ENCODE measurements at regions of chr13 and their contacts with region 1.

Region 1: DNA sequence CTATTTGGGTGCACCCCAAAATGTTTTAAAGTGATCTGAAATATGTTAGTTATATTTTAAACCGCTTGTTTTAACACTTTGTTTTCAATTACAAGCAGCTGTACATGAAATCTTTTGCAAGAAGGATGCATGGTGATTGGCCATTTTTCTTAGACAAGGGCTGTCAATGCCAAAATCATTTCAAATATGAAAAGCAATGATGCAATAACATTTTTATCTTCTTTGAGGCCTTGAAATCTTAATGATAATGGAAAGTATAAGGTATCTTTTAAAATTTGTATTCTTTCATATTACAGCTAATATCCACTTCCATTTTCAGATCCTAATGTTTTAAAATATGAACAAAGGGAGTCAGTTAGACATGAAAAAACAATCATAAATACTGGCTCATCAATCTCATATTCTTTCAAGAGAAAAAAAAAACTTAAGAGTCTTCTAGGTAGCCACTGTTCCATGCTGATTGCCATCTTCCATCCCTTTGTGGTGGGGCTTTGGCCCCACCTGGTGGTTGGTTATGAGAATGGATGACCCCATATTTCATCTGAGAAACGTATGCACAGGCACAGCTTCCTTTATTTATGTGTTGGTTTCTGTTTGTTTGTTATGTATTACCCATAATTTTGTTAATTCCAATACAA is 330.3 kb upstream of the MIR17HG start:
- DNase-seq: peak; percentile 43
- H3K4me3 Mint-ChIP-seq: no peak overlapping the region
- H3K27ac Mint-ChIP-seq: no peak overlapping the region
- H3K4me1 Mint-ChIP-seq: no peaks in the 10 kb centered on the region
- H3K27me3 Mint-ChIP-seq: no peaks in the 10 kb centered on the region

Region 2: GRCh38 chr13:90883592-90883991 is 133.6 kb before region 1 on chr13:
- CTCF ChIA-PET with region 1: no interaction called
- intact Hi-C with region 1: loop called (anchors 5 kb)
- DNase-seq: no peak
- H3K4me3 Mint-ChIP-seq: no peak overlapping the region
- H3K27ac Mint-ChIP-seq: no peak overlapping the region
- H3K4me1 Mint-ChIP-seq: no peaks in the 10 kb centered on the region
- H3K27me3 Mint-ChIP-seq: no peaks in the 10 kb centered on the region

Region 3: DNA sequence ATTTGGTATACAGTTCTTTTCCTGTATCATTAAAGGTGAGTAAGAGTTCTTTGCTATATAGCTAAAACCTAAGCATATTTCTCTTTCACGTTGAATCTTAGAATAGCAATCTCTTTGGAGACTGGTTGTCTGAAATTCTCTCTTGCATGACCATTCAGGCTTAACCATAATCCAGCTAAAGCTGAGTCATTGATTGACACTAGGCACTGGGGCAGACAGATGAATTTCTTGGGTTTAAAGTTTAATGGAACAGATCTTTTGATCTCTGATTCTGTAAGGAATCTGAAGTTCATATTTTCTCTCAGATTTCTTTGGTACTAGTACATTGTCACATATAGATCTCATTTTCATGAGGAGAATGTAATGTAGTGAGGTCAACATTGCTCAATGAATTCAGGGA is 67.0 kb before region 1 on chr13:
- CTCF ChIA-PET with region 1: no interaction called
- intact Hi-C with region 1: no loop called
- DNase-seq: no peak
- H3K4me3 Mint-ChIP-seq: no peak overlapping the region
- H3K27ac Mint-ChIP-seq: no peak overlapping the region
- H3K4me1 Mint-ChIP-seq: no peaks in the 10 kb centered on the region
- H3K27me3 Mint-ChIP-seq: no peaks in the 10 kb centered on the region